ENCODE measurements at regions of chr2 and their contacts with region 1.

Region 1: DNA sequence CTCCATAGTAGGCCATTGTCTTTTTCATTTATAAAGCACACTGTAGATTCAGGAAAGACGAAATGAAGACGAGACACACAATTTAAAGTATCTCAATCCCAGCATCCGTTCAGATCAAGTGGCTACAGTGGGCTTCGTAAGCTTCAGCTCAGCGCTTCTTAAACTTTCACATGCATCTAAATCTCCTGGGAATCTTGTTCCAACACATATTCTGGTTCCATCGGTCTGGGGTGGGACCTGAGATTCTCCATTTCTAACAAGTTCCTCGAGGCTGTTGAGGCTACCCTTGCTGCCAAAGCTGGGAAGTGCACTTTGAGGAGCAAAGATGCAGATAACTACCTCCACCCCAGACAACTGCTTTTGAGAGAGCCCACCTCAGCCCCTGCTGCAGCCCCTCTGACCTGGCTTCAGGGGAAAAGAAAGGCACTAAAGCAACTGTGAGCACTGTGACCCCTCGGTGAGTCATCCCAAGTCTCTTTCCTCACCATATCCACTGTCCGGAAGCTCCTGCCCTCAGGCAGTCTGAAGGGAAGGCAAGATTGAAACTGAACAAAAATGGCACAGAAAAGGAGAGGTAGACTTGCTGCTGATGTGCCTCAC is 201.1 kb upstream of the FBXO11 start:
- DNase-seq: no peak
- H3K4me3 Mint-ChIP-seq: no peak overlapping the region
- H3K27ac Mint-ChIP-seq: no peak overlapping the region
- H3K4me1 Mint-ChIP-seq: peaks cover 24% of the 10 kb centered on the region
- H3K27me3 Mint-ChIP-seq: peaks cover 20% of the 10 kb centered on the region

Region 2: GRCh38 chr2:47862949-47863348 is 244.5 kb before region 1 on chr2:
- CTCF ChIA-PET with region 1: interaction called, 31 read pairs
- DNase-seq: no peak
- H3K4me3 Mint-ChIP-seq: no peak overlapping the region
- H3K27ac Mint-ChIP-seq: no peak overlapping the region
- H3K4me1 Mint-ChIP-seq: peaks cover 21% of the 10 kb centered on the region
- H3K27me3 Mint-ChIP-seq: no peaks in the 10 kb centered on the region

Region 3: DNA sequence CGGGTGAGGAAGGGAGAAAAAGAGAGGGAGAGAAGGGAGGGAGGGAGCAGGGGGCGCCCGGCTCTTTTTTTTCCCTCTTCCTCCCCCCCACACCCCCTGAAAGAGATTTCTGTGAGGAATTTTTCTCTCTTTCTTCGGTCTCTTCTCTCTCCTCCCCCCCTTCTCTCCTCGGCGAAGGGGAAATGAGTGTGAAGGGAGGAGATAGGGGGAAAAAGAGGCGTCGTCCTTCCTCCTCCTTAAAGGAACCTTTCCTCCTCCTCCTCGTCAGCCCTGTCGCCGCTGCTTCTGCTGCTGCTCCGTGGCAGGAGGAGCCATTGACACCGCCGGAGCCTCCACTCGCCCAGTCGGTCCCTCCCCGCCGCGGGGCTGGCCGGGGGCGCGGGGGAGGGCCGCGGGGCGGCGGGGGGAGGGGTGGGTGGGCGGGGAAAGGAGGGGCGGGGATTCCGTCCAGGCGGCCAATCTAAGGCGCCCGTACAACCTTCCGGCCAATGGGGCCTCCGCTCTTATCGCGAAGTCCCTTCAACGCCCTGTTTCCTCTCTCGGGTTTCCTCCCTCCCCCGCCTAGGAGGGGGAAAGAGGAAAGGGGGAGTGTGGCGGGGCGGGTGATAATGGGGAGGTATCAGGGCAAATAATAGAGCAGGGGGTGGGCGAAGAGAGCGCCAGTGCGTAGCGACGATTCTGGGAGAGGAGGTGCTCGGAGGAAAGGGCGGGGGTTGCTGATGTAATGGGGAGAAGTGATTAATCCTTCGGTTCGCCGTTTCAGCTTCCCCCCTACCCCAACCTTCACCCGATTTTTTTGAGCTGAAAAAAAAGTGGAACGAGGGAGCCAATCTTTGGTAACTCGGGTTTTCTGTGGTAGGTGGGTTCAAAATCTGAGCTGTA is 201.0 kb before region 1 on chr2 and contains the start of gene FBXO11:
- CTCF ChIA-PET with region 1: interaction called, 10 read pairs
- DNase-seq: peak; percentile 98
- H3K4me3 Mint-ChIP-seq: peak within 1 kb of the TSS; percentile 72
- H3K27ac Mint-ChIP-seq: peak within 1 kb of the TSS; percentile 97
- H3K4me1 Mint-ChIP-seq: peaks cover 39% of the 10 kb centered on the region
- H3K27me3 Mint-ChIP-seq: no peaks in the 10 kb centered on the region

Region 4: DNA sequence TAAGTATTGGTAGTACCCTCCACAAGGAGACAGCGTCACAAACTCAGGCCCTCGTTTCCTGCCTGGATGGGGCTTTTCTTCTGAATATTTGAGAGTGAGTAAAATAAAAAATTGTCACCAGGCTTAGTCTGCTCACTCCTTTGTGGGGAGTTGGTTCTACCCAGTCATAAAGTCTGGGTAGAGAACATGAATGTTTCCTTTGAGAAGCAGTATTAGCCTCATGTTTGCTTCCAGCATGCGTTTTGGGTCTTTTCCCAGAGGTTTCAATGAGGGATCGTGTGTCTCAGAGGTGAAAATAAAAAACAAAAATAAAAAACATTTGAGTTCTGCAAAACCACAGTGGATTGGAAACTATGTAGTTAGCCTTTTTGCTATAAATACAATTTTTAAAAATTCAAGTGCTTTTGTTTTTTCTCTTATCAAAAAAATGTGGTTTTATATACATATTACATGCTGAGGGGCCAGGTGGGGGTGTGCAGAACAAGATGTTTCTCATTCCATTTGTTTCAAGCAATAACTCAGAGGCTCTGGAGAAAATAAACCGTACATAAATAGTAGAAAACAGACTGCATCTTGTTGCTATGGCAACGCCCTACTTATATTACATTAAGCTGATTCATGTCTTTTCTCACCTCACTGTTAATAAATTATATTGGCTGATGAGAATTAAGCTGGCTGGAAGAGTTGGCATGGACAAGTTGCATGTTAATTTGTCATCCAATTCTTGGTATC is 24.3 kb after region 1 on chr2:
- CTCF ChIA-PET with region 1: no interaction called
- DNase-seq: no peak
- H3K4me3 Mint-ChIP-seq: no peak overlapping the region
- H3K27ac Mint-ChIP-seq: no peak overlapping the region
- H3K4me1 Mint-ChIP-seq: no peaks in the 10 kb centered on the region
- H3K27me3 Mint-ChIP-seq: no peaks in the 10 kb centered on the region

Measured in activated naive CD4-positive, alpha-beta T cell treated with anti-CD3 and anti-CD28 coated beads, Interleukin-2, amount 10 ng/mL, durations not matched to agents 7 days and 5 days (primary cell).